Endothelial cell of umbilical vein (primary cell): ENCODE measurements at regions of chr22 and their contacts with region 1.

Region 1: GRCh38 chr22:37498289-37498909 is 12.2 kb upstream of the MFNG start:
- DNase-seq: peak; percentile 20
- H3K4me3 ChIP-seq: no peak overlapping the region
- H3K27ac ChIP-seq: no peak overlapping the region
- H3K4me1 ChIP-seq: peaks cover 51% of the 10 kb centered on the region
- H3K27me3 ChIP-seq: no peaks in the 10 kb centered on the region
- CTCF ChIP-seq: peak; percentile 51 to 72
- POLR2A ChIP-seq: no peak

Region 2: DNA sequence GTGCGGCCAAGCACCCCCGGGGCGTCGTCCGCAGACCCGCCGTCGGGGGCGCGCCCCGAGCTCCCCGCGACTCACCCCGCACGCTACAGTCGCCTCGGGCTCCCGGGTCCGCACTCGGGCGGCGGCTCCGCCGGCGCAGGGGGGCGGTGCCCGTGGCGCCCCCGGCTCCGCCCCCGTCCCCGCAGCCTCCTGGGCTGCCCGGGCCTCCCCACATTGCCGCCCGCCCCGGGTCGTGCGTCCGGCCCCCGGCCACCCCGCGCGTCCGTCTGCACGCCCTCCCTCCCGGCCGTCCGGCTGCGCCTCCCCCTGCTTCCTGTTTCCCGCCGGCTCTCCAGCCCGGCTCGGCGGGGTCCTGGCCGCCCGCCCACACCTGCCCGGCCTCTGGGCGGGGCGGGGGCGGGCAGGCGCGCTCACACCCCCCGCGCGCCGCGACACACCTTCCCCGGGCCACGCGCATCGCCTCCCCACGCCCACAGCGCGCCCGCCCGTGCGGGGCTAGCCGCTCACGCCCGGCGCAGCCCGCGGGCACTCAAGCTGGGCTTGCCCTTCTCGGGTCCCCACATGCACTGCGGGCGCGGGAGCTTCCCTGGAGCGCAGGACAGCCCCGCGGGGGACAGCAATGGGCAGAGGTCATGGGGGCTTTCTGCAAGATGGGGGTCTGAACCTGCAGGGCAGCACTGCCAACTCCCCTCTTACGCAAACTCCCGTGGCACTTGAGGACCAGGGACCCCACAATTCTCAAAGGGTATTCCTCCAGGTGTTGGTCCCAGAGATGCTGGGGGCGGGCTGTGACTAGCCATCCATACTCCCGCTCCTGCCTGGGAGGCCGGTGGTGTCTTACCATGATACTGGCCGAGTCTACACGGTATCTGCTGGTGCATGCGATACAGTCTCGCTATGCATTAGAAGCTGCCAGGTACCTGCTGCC is 21.1 kb after region 1 on chr22 and contains the start of gene CARD10:
- CTCF ChIA-PET with region 1: interaction called, 10 read pairs
- POLR2A ChIA-PET with region 1: interaction called, 3 read pairs
- dilution Hi-C with region 1: no loop called
- intact Hi-C with region 1: no loop called
- DNase-seq: peak; percentile 33
- H3K4me3 ChIP-seq: peak within 1 kb of the TSS; percentile 69 to 84 (median 78)
- H3K27ac ChIP-seq: no peak within 1 kb of the TSS
- H3K4me1 ChIP-seq: peaks cover 9% of the 10 kb centered on the region
- H3K27me3 ChIP-seq: no peaks in the 10 kb centered on the region
- CTCF ChIP-seq: no peak
- POLR2A ChIP-seq: peak; percentile 64
- total RNA-seq, gene CARD10: 39.5 and 40.6 TPM in 2 replicates